MCF 10A (cell line): ENCODE measurements at regions of chr13 and their contacts with region 1.

Region 1: DNA sequence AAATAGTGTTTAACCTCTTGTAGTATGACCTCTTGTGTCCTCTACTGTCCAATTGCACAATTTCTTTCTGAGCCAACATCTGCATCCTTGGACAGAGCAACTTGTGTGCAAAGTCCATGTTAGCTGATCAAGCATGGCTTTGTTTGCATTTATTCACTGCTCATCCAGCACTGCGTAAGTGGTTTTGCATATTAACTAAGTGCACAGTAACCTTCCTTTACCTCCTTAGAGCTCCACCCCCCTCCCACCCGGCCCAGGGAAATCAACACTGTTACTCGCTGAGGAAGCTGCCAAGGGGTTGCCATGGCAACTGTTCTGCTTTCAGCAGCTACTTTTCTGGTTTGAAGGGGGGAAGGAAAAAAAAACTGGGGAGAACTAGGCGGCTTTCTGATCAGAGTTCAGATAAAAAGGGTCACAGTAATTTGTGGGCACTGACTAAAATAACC is 153.5 kb upstream of the KLF12 start:
- DNase-seq: peak; percentile 30
- H3K4me3 Mint-ChIP-seq: no peak overlapping the region
- H3K27ac Mint-ChIP-seq: peak overlapping the region; percentile 62
- H3K4me1 Mint-ChIP-seq: peaks cover 24% of the 10 kb centered on the region
- H3K27me3 Mint-ChIP-seq: no peaks in the 10 kb centered on the region
- CTCF ChIP-seq: no peak

Region 2: GRCh38 chr13:73754727-73755292 is 532.9 kb before region 1 on chr13:
- CTCF ChIA-PET with region 1: interaction called, 30 read pairs
- POLR2A ChIA-PET with region 1: no interaction called
- intact Hi-C with region 1: loop called (anchors 1 kb)
- DNase-seq: peak; percentile 71
- H3K4me3 Mint-ChIP-seq: no peak overlapping the region
- H3K27ac Mint-ChIP-seq: no peak overlapping the region
- H3K4me1 Mint-ChIP-seq: peaks cover 5% of the 10 kb centered on the region
- H3K27me3 Mint-ChIP-seq: no peaks in the 10 kb centered on the region
- CTCF ChIP-seq: peak; percentile 61

Region 3: GRCh38 chr13:73849292-73849691 is 438.5 kb before region 1 on chr13:
- CTCF ChIA-PET with region 1: interaction called, 11 read pairs
- POLR2A ChIA-PET with region 1: no interaction called
- intact Hi-C with region 1: no loop called
- DNase-seq: peak; percentile 34
- H3K4me3 Mint-ChIP-seq: no peak overlapping the region
- H3K27ac Mint-ChIP-seq: peak overlapping the region; percentile 16
- H3K4me1 Mint-ChIP-seq: no peaks in the 10 kb centered on the region
- H3K27me3 Mint-ChIP-seq: no peaks in the 10 kb centered on the region
- CTCF ChIP-seq: peak; percentile 18

Region 4: DNA sequence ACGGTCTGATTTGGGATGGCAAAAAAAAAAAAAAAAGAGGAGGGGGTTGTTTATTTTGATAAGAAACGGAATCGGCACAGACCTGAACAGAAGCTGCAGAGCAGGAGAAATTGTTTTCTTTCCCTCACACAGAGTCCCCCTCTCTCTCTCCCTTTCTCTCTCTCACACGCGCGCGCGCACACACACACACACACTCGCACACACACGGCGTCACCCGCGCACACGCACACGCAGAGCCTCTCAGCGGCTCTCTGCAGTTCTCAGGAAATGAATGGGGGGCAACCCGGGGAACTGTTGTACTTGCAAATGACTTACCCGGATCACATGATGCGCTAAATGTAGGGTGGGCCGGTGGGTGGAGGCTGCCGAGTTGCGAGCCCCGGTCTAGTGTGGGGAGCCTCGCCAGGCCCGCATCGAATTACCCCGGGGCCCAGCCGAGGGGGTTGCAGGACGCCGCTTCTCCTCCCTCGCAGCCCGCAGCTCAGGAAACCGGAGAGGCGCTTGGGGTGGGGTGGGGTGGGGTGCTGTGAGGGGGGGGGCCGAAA is 154.0 kb before region 1 on chr13:
- CTCF ChIA-PET with region 1: interaction called, 5 read pairs
- POLR2A ChIA-PET with region 1: interaction called, 3 read pairs
- intact Hi-C with region 1: loop called (anchors 1 kb)
- DNase-seq: peak; percentile 73
- H3K4me3 Mint-ChIP-seq: no peak overlapping the region
- H3K27ac Mint-ChIP-seq: peak overlapping the region; percentile 91
- H3K4me1 Mint-ChIP-seq: peaks cover 18% of the 10 kb centered on the region
- H3K27me3 Mint-ChIP-seq: no peaks in the 10 kb centered on the region
- CTCF ChIP-seq: no peak

Region 5: GRCh38 chr13:74770361-74770760 is 482.6 kb after region 1 on chr13:
- CTCF ChIA-PET with region 1: no interaction called
- POLR2A ChIA-PET with region 1: no interaction called
- intact Hi-C with region 1: loop called (anchors 10 kb)
- DNase-seq: peak; percentile 22
- H3K4me3 Mint-ChIP-seq: no peak overlapping the region
- H3K27ac Mint-ChIP-seq: peak overlapping the region; percentile 57
- H3K4me1 Mint-ChIP-seq: peaks cover 38% of the 10 kb centered on the region
- H3K27me3 Mint-ChIP-seq: no peaks in the 10 kb centered on the region
- CTCF ChIP-seq: no peak

Region 6: DNA sequence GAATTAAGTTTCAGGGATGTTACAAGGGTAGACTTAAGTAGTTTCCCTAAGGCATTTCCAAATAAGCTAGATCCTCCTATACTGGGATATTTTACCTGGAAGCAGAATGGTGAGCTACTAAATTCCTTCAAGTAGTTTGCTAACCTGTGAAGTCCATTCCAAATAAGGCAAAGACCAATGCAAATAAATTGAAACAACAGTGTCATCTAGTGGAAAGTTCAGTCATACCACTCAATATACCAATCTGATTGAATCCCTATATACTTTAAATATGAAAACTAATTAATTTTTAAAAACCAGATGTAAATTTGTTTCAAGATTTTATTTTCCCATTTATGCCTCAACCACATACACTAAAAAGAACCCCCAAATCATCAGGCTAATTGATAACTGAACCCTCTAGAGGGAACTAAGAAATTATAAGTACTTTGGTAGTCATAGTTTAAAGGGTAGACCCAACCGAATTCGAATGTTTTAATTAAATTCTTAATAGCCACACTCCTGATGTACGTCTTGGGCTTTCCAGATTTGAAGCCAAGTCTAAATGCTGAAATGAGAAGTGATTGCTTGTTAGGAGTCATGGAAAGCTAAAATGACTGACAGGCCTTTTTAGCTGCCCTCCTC is 970.5 kb after region 1 on chr13:
- CTCF ChIA-PET with region 1: interaction called, 7 read pairs
- POLR2A ChIA-PET with region 1: no interaction called
- intact Hi-C with region 1: loop called (anchors 2 kb)
- DNase-seq: peak; percentile 70
- H3K4me3 Mint-ChIP-seq: no peak overlapping the region
- H3K27ac Mint-ChIP-seq: no peak overlapping the region
- H3K4me1 Mint-ChIP-seq: peaks cover 10% of the 10 kb centered on the region
- H3K27me3 Mint-ChIP-seq: no peaks in the 10 kb centered on the region
- CTCF ChIP-seq: peak; percentile 67